Mucosa of descending colon (tissue), 3 donors: ENCODE measurements at regions of chr10 and their contacts with region 1.

Region 1: DNA sequence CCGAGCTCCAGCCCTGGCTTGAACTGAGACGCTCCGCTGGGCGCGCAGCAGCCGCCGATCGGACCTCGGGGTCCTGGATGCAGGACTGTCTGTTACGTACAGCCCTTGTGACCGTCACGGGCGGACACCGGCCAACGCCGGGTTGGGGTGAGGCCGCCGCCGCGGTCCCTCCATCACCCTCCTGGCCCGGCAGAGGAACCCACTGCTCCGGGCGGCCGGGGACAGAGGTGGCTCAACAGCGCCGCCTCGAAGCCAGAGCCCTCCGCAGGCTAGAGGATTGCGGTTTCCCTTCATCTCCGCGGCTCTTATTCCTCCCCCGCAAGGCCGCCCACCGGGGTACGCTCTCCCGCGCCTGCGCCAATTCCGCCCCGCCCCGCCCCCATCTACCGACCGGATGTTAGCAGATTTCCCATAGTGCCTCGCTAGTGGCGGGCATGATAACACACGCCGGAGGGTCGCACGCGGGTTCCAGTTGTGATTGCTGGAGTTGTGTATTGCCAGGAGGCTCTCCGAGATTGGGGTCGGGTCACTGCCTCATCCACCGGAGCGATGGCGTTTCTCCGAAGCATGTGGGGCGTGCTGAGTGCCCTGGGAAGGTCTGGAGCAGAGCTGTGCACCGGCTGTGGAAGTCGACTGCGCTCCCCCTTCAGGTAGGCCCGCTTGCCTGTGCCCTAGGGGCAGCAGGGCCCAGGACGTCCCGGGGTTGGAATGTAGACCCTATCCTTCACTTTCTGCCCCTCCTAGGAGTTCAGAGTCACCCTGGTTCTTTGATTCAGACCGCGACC is at the start of gene TFAM:
- DNase-seq: peak; percentile 97 to 98 (median 98)
- ATAC-seq: peak; percentile 98
- H3K4me3 ChIP-seq: peak within 1 kb of the TSS; percentile 69
- H3K4me1 ChIP-seq: peaks cover 22% of the 10 kb centered on the region
- CTCF ChIP-seq: no peak
- total RNA-seq, gene TFAM: 26.5 to 36.7 (median 30.8) TPM

Region 2: DNA sequence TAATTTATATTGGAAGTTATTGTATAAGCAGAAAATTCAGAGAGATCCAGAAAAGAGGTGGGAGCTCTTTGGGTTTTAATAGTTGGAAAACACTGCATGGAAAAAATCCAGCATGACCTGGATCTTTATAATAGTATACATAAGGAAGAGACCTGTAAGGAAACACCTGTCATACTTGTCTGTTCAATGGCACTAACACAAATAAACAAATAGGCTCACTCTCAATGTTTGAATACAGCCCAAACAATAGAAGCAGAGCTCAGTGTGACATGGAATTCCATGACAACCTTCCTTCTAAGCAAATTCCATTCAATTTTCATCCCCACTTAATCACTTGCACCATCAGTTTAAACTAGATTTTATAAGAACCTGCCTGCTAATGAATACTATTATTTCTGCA is 84.5 kb before region 1 on chr10:
- intact Hi-C with region 1: loop called in 1 of 2 experiments (anchors 10 kb)
- DNase-seq: no peak
- ATAC-seq: peak; percentile 19
- H3K4me3 ChIP-seq: no peak overlapping the region
- H3K4me1 ChIP-seq: no peaks in the 10 kb centered on the region
- CTCF ChIP-seq: no peak

Region 3: GRCh38 chr10:58322835-58323209 is 62.4 kb before region 1 on chr10:
- intact Hi-C with region 1: no loop called
- DNase-seq: no peak
- ATAC-seq: peak; percentile 30
- H3K4me3 ChIP-seq: no peak overlapping the region
- H3K4me1 ChIP-seq: peaks cover 7% of the 10 kb centered on the region
- CTCF ChIP-seq: no peak

Region 4: GRCh38 chr10:58334817-58335305 is 50.3 kb before region 1 on chr10 and contains the start of gene UBE2D1:
- intact Hi-C with region 1: loop called in 1 of 2 experiments (anchors 10 kb)
- DNase-seq: peak; percentile 95
- ATAC-seq: peak; percentile 99
- H3K4me3 ChIP-seq: peak within 1 kb of the TSS; percentile 71
- H3K4me1 ChIP-seq: peaks cover 16% of the 10 kb centered on the region
- CTCF ChIP-seq: peak; percentile 10
- total RNA-seq, gene UBE2D1: 17.2 to 18.4 (median 18.4) TPM